ENCODE measurements at regions of chr4 and their contacts with region 1.

Region 1: DNA sequence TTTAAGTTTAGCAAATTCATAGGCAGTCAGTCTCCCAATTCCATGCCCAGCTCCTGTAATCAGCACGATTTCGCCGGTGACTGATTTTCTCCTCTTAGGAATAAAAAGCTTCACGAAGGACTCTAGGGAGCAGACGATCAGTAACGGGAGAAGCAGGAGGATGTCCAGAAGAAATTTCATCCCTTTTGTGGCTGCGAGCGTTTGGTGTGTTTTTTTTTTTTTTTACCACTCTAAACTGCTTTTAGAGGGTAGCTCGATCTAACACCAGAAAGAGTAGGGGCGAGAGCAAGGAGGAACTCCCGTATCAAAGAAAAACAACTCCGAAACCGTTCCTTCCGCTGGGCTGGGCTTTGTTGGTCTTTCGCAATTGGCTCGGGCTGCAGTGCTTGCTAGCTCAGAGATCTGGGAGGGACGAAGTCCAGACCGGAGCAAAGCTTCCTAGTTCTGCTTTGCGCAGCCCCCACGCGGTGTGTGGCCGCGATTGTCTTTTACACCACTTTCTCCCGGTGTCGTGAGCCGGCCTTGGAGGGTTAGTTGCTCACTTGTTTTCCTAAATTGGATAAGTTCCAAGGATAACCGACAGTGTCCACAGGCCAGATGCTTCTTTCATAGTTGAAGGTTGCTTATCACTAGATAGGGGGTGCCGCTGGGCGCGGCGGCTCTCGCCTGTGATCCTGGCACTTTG is at the start of gene HSD17B11:
- DNase-seq: peak; percentile 62 to 93 (median 74)
- ATAC-seq: peak; percentile 97
- H3K4me3 ChIP-seq: peak within 1 kb of the TSS; percentile 90
- H3K4me3 Mint-ChIP-seq: peak within 1 kb of the TSS; percentile 97
- H3K27ac ChIP-seq: peak within 1 kb of the TSS; percentile 72 to 81
- H3K27ac Mint-ChIP-seq: peak within 1 kb of the TSS; percentile 82
- H3K4me1 ChIP-seq: peaks cover 31% of the 10 kb centered on the region
- H3K4me1 Mint-ChIP-seq: peaks cover 51% of the 10 kb centered on the region
- H3K27me3 ChIP-seq: no peaks in the 10 kb centered on the region
- H3K27me3 Mint-ChIP-seq: no peaks in the 10 kb centered on the region
- CTCF ChIP-seq: no peak
- total RNA-seq, gene HSD17B11: 34.9 to 36.5 TPM

Region 2: DNA sequence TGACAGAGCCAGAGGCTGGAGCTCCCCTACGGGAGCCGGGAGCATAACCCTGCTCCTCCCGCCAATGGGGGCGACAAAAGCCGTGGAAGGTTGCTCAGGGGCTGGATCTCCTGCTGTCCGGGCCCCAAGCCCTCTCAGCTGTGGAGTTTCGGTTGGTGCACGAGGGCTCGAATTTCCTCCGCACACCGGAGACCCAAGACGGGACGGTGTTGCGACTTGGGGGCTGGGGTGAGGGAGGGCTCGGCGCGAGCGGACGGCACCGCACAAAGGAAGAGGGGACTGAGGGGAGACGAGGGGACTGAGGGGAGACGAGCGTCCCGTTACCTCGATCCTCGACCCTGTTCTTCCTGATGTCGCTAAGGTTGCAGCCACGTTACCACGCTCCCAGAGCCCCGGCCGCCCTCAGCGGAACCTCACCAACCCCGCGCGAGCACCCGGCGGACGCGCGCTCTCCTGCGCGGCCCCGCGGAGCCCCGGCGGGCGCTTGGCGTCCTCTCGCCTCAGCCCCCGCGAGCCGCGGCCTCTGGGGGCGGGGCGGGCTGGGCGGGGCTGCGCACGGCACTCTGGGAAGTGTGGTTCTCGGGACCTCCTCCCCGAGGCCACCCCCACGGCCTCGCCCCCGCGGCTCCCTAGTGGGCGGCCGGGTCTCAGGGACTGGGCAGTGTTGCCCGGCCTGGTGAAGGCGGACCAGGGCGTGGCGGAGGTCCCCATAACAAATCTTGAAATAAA is 170.8 kb before region 1 on chr4 and contains the start of gene KLHL8:
- CTCF ChIA-PET with region 1: interaction called, 3 read pairs
- POLR2A ChIA-PET with region 1: interaction called, 6 read pairs
- intact Hi-C with region 1: loop called in 1 of 2 experiments (anchors 5 kb)
- DNase-seq: peak; percentile 71 to 94 (median 83)
- ATAC-seq: peak; percentile 88
- H3K4me3 ChIP-seq: peak within 1 kb of the TSS; percentile 96
- H3K4me3 Mint-ChIP-seq: peak within 1 kb of the TSS; percentile 96
- H3K27ac ChIP-seq: peak within 1 kb of the TSS; percentile 79 to 88
- H3K27ac Mint-ChIP-seq: peak within 1 kb of the TSS; percentile 88
- H3K4me1 ChIP-seq: peaks cover 24% of the 10 kb centered on the region
- H3K4me1 Mint-ChIP-seq: peaks cover 24% of the 10 kb centered on the region
- H3K27me3 ChIP-seq: no peaks in the 10 kb centered on the region
- H3K27me3 Mint-ChIP-seq: no peaks in the 10 kb centered on the region
- CTCF ChIP-seq: no peak
- total RNA-seq, gene KLHL8: 6.3 to 7.0 TPM

Region 3: DNA sequence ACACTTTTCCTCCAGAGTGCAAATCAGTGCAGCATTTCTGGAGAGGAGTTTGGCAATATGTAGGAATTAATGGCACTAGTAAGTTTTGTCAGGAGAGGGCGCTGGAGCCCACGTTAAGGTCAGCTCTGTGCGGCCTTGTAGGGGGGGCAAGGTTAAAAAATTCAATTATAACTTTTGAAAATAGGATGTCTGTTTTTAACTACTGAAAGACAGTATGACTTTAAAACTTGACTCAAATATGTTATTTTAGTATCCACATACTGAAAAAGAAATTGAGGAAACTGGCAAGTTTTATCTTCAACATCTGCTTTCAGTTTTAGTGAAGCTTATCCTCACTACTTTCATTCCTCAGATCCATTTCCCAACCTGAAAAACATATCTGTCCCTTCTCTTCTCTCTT is 37.4 kb before region 1 on chr4:
- CTCF ChIA-PET with region 1: interaction called, 3 read pairs
- POLR2A ChIA-PET with region 1: interaction called, 3 read pairs
- intact Hi-C with region 1: loop called in 1 of 2 experiments (anchors 5 kb)
- DNase-seq: peak in 13 of 14 experiments; percentile 4 to 63 (median 32)
- ATAC-seq: peak; percentile 74
- H3K4me3 ChIP-seq: no peak overlapping the region
- H3K4me3 Mint-ChIP-seq: no peak overlapping the region
- H3K27ac ChIP-seq: no peak overlapping the region
- H3K27ac Mint-ChIP-seq: no peak overlapping the region
- H3K4me1 ChIP-seq: no peaks in the 10 kb centered on the region
- H3K4me1 Mint-ChIP-seq: peaks cover 6% of the 10 kb centered on the region
- H3K27me3 ChIP-seq: no peaks in the 10 kb centered on the region
- H3K27me3 Mint-ChIP-seq: no peaks in the 10 kb centered on the region
- CTCF ChIP-seq: peak; percentile 81

Region 4: GRCh38 chr4:87370068-87370467 is 21.0 kb before region 1 on chr4:
- CTCF ChIA-PET with region 1: interaction called, 20 read pairs
- POLR2A ChIA-PET with region 1: interaction called, 12 read pairs
- intact Hi-C with region 1: no loop called
- DNase-seq: no peak
- ATAC-seq: no peak
- H3K4me3 ChIP-seq: no peak overlapping the region
- H3K4me3 Mint-ChIP-seq: no peak overlapping the region
- H3K27ac ChIP-seq: no peak overlapping the region
- H3K27ac Mint-ChIP-seq: no peak overlapping the region
- H3K4me1 ChIP-seq: no peaks in the 10 kb centered on the region
- H3K4me1 Mint-ChIP-seq: peaks cover 10% of the 10 kb centered on the region
- H3K27me3 ChIP-seq: no peaks in the 10 kb centered on the region
- H3K27me3 Mint-ChIP-seq: no peaks in the 10 kb centered on the region
- CTCF ChIP-seq: no peak

Region 5: GRCh38 chr4:87375719-87376291 is 15.2 kb before region 1 on chr4:
- CTCF ChIA-PET with region 1: interaction called, 20 read pairs
- POLR2A ChIA-PET with region 1: interaction called, 12 read pairs
- intact Hi-C with region 1: no loop called
- DNase-seq: peak in 4 of 14 experiments; percentile 11 to 63 (median 50)
- ATAC-seq: no peak
- H3K4me3 ChIP-seq: no peak overlapping the region
- H3K4me3 Mint-ChIP-seq: no peak overlapping the region
- H3K27ac ChIP-seq: no peak overlapping the region
- H3K27ac Mint-ChIP-seq: no peak overlapping the region
- H3K4me1 ChIP-seq: no peaks in the 10 kb centered on the region
- H3K4me1 Mint-ChIP-seq: peaks cover 6% of the 10 kb centered on the region
- H3K27me3 ChIP-seq: no peaks in the 10 kb centered on the region
- H3K27me3 Mint-ChIP-seq: no peaks in the 10 kb centered on the region
- CTCF ChIP-seq: no peak

Region 6: DNA sequence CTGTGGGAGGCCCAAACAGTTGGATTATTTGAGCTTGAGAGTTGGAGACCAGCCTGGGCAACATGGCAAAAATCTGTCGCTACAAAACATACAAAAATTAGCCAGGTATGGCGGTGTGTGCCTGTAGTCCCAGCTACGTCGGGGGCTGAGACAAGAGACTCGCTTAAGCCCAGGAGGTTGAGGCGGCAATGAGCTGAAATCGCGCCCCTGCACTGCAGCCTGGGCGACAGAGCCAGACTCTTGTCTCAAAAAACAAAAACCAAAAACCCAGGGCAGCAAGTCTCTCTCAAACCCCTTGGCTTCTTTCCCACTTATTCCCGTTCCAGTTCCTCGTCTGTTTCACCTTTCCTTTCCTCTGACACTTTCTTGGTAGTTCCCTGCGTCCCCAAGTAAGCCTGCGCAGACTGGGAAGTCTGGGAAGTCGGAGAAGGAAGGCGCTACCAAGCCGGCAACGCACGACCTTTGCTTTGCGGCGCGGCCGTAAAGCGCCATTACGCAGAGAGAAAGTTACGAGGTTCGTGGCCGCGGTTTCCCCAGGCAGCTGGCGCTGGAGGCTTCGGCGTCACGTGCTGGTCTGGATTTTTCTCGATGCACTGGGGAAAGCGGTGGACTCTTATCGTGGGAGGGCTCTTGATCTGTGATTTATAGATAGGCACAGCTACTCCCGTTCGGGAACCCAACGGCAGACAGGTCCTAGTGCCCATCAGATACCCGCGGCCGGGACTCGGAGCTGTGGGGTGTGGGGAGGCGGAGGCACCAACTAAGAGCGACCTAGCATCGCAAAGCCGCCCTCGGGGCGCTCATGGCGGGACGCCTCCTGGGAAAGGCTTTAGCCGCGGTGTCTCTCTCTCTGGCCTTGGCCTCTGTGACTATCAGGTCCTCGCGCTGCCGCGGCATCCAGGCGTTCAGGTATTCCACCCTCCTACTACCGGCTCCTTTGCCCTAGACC is 31.3 kb after region 1 on chr4 and contains the start of gene NUDT9:
- CTCF ChIA-PET with region 1: interaction called, 15 read pairs
- POLR2A ChIA-PET with region 1: interaction called, 65 read pairs
- intact Hi-C with region 1: loop called (anchors 1 to 2 kb)
- DNase-seq: peak; percentile 66 to 93 (median 80)
- ATAC-seq: peak; percentile 80
- H3K4me3 ChIP-seq: peak within 1 kb of the TSS; percentile 77
- H3K4me3 Mint-ChIP-seq: peak within 1 kb of the TSS; percentile 95
- H3K27ac ChIP-seq: peak within 1 kb of the TSS; percentile 76 to 87
- H3K27ac Mint-ChIP-seq: peak within 1 kb of the TSS; percentile 97
- H3K4me1 ChIP-seq: peaks cover 31% of the 10 kb centered on the region
- H3K4me1 Mint-ChIP-seq: peaks cover 52% of the 10 kb centered on the region
- H3K27me3 ChIP-seq: no peaks in the 10 kb centered on the region
- H3K27me3 Mint-ChIP-seq: no peaks in the 10 kb centered on the region
- CTCF ChIP-seq: peak; percentile 18
- total RNA-seq, gene NUDT9: 4.4 to 4.8 TPM

Region 7: DNA sequence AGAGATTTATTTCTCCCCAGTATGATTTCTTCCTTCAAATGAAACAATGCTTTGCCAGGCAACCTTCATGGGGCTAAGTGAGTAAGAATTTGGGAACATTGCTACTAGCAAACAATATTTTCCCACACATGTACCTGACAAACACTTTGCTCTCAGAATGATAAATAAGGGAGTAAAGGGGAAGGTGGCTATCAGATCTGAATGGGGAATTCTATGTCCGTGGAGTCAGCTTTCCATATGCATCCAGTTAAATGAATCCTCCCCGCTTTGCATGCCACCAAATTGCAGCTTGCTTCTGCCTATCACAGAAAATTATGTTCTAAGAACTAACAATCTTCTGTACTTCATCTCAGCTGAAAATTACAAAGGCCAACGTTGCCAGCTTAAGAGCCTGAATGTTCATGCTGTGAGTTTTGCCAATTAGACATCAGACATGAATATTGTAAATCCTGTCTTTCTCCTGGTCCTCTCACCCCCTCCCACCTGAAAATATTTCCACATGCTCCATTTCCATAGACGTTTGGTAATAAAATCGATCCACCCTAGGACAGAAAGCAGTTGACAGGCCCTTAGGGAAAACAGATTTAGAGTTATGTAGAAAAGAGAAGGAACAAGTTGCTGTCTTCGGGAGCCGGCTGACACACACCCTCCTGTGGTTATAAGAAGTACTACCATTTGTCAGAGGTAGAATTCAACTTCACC is 448.0 kb after region 1 on chr4:
- CTCF ChIA-PET with region 1: no interaction called
- POLR2A ChIA-PET with region 1: no interaction called
- intact Hi-C with region 1: no loop called
- DNase-seq: peak in 2 of 14 experiments; percentile 28 to 38
- ATAC-seq: peak; percentile 48
- H3K4me3 ChIP-seq: no peak overlapping the region
- H3K4me3 Mint-ChIP-seq: no peak overlapping the region
- H3K27ac ChIP-seq: no peak overlapping the region
- H3K27ac Mint-ChIP-seq: no peak overlapping the region
- H3K4me1 ChIP-seq: no peaks in the 10 kb centered on the region
- H3K4me1 Mint-ChIP-seq: no peaks in the 10 kb centered on the region
- H3K27me3 ChIP-seq: peaks cover 0 to 4% of the 10 kb centered on the region in 2 experiments
- H3K27me3 Mint-ChIP-seq: peaks cover 35% of the 10 kb centered on the region
- CTCF ChIP-seq: peak; percentile 46

Region 8: GRCh38 chr4:87882321-87882720 is 491.3 kb after region 1 on chr4:
- CTCF ChIA-PET with region 1: no interaction called
- POLR2A ChIA-PET with region 1: no interaction called
- intact Hi-C with region 1: no loop called
- DNase-seq: no peak
- ATAC-seq: no peak
- H3K4me3 ChIP-seq: no peak overlapping the region
- H3K4me3 Mint-ChIP-seq: no peak overlapping the region
- H3K27ac ChIP-seq: no peak overlapping the region
- H3K27ac Mint-ChIP-seq: no peak overlapping the region
- H3K4me1 ChIP-seq: no peaks in the 10 kb centered on the region
- H3K4me1 Mint-ChIP-seq: no peaks in the 10 kb centered on the region
- H3K27me3 ChIP-seq: peaks cover 0 to 3% of the 10 kb centered on the region in 2 experiments
- H3K27me3 Mint-ChIP-seq: peaks cover 8% of the 10 kb centered on the region
- CTCF ChIP-seq: no peak

Measured in CD4-positive, alpha-beta T cell (primary cell).